Activated CD8-positive, alpha-beta T cell treated with anti-CD3 and anti-CD28 coated beads, Interleukin-2, amount 10 ng/mL, durations not matched to agents 7 days and 5 days (primary cell): ENCODE measurements at regions of chr11 and their contacts with region 1.

Region 1: GRCh38 chr11:1262172-1263006 is 39.5 kb downstream of the MUC5B start:
- DNase-seq: peak; percentile 92
- ATAC-seq: peak; percentile 93
- H3K4me3 Mint-ChIP-seq: peak overlapping the region; percentile 74
- H3K27ac Mint-ChIP-seq: peak overlapping the region; percentile 92
- H3K4me1 Mint-ChIP-seq: peaks cover 18% of the 10 kb centered on the region
- H3K27me3 Mint-ChIP-seq: no peaks in the 10 kb centered on the region

Region 2: DNA sequence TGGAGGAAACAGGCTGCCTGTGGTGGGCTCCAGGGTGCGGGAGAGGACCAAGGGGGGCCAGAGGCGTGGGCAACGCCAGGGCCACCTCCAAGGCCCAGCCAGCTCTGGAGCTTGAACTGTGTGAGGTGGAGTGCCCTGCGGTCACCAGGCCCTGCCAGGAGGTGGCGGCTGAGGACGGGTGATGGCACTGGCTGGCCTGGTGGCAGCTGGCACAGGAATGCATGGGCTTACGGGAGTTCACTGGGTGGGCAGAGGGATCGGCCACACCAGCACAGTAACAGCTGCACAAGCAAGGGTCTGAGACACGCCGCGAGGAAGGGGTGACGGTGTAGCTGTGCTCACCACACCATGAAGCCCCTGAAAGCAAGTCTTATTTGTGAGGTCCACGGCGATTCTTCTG is 31.2 kb after region 1 on chr11:
- CTCF ChIA-PET with region 1: no interaction called
- POLR2A ChIA-PET with region 1: no interaction called
- DNase-seq: peak; percentile 37
- ATAC-seq: peak; percentile 57
- H3K4me3 Mint-ChIP-seq: no peak overlapping the region
- H3K27ac Mint-ChIP-seq: no peak overlapping the region
- H3K4me1 Mint-ChIP-seq: no peaks in the 10 kb centered on the region
- H3K27me3 Mint-ChIP-seq: no peaks in the 10 kb centered on the region

Region 3: GRCh38 chr11:1309498-1310317 is 47.3 kb after region 1 on chr11 and contains the start of gene TOLLIP:
- CTCF ChIA-PET with region 1: interaction called, 3 read pairs
- POLR2A ChIA-PET with region 1: interaction called, 12 read pairs
- DNase-seq: peak; percentile 97
- ATAC-seq: peak; percentile 93
- H3K4me3 Mint-ChIP-seq: peak within 1 kb of the TSS; percentile 75
- H3K27ac Mint-ChIP-seq: peak within 1 kb of the TSS; percentile 96
- H3K4me1 Mint-ChIP-seq: peaks cover 37% of the 10 kb centered on the region
- H3K27me3 Mint-ChIP-seq: peaks cover 17% of the 10 kb centered on the region
- total RNA-seq, gene TOLLIP: 27.1 to 34.3 TPM